ENCODE measurements at regions of chr3 and their contacts with region 1.

Region 1: GRCh38 chr3:171829841-171830517 is 13.2 kb upstream of the TMEM212 start:
- DNase-seq: peak in 2 of 4 experiments; percentile 58 to 80
- ATAC-seq: peak; percentile 96
- H3K4me3 ChIP-seq: no peak overlapping the region
- H3K27ac ChIP-seq: no peak overlapping the region
- H3K4me1 ChIP-seq: peaks cover 0 to 15% of the 10 kb centered on the region in 2 experiments; a peak in 3 of 5 replicates
- H3K27me3 ChIP-seq: no peaks in the 10 kb centered on the region
- CTCF ChIP-seq: peak; percentile 71 to 83 (median 75)
- EP300 ChIP-seq: no peak
- POLR2A ChIP-seq: no peak
- RAD21 ChIP-seq: peak; percentile 69 to 89

Region 2: GRCh38 chr3:171614318-171614921 is 215.6 kb before region 1 on chr3:
- CTCF ChIA-PET with region 1: interaction called, 3 read pairs
- POLR2A ChIA-PET with region 1: no interaction called
- in situ Hi-C with region 1: no loop called
- intact Hi-C with region 1: loop called (anchors 5 kb)
- DNase-seq: peak; percentile 32 to 57 (median 46)
- ATAC-seq: peak; percentile 96
- H3K4me3 ChIP-seq: no peak overlapping the region
- H3K27ac ChIP-seq: no peak overlapping the region
- H3K4me1 ChIP-seq: no peaks in the 10 kb centered on the region
- H3K27me3 ChIP-seq: no peaks in the 10 kb centered on the region
- CTCF ChIP-seq: peak; percentile 74 to 81 (median 76)
- EP300 ChIP-seq: no peak
- POLR2A ChIP-seq: no peak
- RAD21 ChIP-seq: peak in 1 of 2 experiments; percentile 72; a peak in 3 of 4 replicates

Region 3: GRCh38 chr3:171646357-171647133 is 183.4 kb before region 1 on chr3:
- CTCF ChIA-PET with region 1: interaction called, 20 read pairs
- POLR2A ChIA-PET with region 1: no interaction called
- in situ Hi-C with region 1: no loop called
- intact Hi-C with region 1: loop called (anchors 1 kb)
- DNase-seq: peak; percentile 11 to 36 (median 17)
- ATAC-seq: peak; percentile 76
- H3K4me3 ChIP-seq: no peak overlapping the region
- H3K27ac ChIP-seq: no peak overlapping the region
- H3K4me1 ChIP-seq: peaks cover 0 to 4% of the 10 kb centered on the region in 2 experiments; a peak in 1 of 5 replicates
- H3K27me3 ChIP-seq: no peaks in the 10 kb centered on the region
- CTCF ChIP-seq: peak; percentile 27 to 65 (median 43); a peak in 3 of 6 replicates
- EP300 ChIP-seq: no peak
- POLR2A ChIP-seq: no peak
- RAD21 ChIP-seq: peak; percentile 37 to 64

Region 4: DNA sequence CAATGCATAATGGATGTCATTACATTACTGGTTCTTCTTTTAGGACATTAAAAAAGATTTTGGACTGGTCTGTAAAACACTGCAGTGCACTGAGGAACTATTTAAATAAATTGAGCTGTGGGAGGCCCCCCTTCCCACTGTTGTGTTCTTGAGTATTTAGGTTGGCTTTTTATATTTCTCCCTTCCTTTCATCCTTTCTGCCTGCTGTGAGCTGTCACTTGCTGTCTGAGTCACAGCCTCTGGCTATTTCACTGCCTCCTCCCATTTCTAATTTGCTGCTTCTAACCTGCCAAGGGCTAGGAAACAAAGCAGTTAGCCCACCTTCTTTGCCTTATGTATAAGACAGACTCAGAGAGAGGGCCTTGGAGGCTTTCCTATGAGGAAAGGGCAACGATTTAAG is 120.4 kb after region 1 on chr3:
- CTCF ChIA-PET with region 1: no interaction called
- POLR2A ChIA-PET with region 1: no interaction called
- in situ Hi-C with region 1: no loop called
- intact Hi-C with region 1: no loop called
- DNase-seq: no peak
- ATAC-seq: peak; percentile 79
- H3K4me3 ChIP-seq: no peak overlapping the region
- H3K27ac ChIP-seq: 0 out of 3 replicates have a peak overlapping the region, but pooled peaks have one; percentile 28
- H3K4me1 ChIP-seq: no peaks in the 10 kb centered on the region; a peak in 2 of 5 replicates
- H3K27me3 ChIP-seq: no peaks in the 10 kb centered on the region
- CTCF ChIP-seq: no peak
- EP300 ChIP-seq: no peak
- POLR2A ChIP-seq: no peak
- RAD21 ChIP-seq: no peak

Region 5: GRCh38 chr3:172084871-172085556 is 255.0 kb after region 1 on chr3:
- CTCF ChIA-PET with region 1: no interaction called
- POLR2A ChIA-PET with region 1: no interaction called
- in situ Hi-C with region 1: no loop called
- intact Hi-C with region 1: no loop called
- DNase-seq: no peak
- ATAC-seq: no peak
- H3K4me3 ChIP-seq: no peak overlapping the region
- H3K27ac ChIP-seq: peak overlapping the region; percentile 14; the same call in 1 of the 3 replicates
- H3K4me1 ChIP-seq: peaks cover 4 to 36% of the 10 kb centered on the region in 2 experiments; a peak in 3 of 5 replicates
- H3K27me3 ChIP-seq: no peaks in the 10 kb centered on the region
- CTCF ChIP-seq: no peak
- EP300 ChIP-seq: no peak
- POLR2A ChIP-seq: no peak
- RAD21 ChIP-seq: no peak

Region 6: GRCh38 chr3:172341482-172342059 is 511.6 kb after region 1 on chr3:
- CTCF ChIA-PET with region 1: no interaction called
- POLR2A ChIA-PET with region 1: no interaction called
- in situ Hi-C with region 1: no loop called
- intact Hi-C with region 1: loop called (anchors 2 kb)
- DNase-seq: peak; percentile 37 to 67 (median 42)
- ATAC-seq: peak; percentile 84
- H3K4me3 ChIP-seq: no peak overlapping the region
- H3K27ac ChIP-seq: no peak overlapping the region
- H3K4me1 ChIP-seq: no peaks in the 10 kb centered on the region
- H3K27me3 ChIP-seq: no peaks in the 10 kb centered on the region
- CTCF ChIP-seq: peak; percentile 43 to 70 (median 55); a peak in 5 of 6 replicates
- EP300 ChIP-seq: no peak
- POLR2A ChIP-seq: no peak
- RAD21 ChIP-seq: peak; percentile 48 to 64

Region 7: DNA sequence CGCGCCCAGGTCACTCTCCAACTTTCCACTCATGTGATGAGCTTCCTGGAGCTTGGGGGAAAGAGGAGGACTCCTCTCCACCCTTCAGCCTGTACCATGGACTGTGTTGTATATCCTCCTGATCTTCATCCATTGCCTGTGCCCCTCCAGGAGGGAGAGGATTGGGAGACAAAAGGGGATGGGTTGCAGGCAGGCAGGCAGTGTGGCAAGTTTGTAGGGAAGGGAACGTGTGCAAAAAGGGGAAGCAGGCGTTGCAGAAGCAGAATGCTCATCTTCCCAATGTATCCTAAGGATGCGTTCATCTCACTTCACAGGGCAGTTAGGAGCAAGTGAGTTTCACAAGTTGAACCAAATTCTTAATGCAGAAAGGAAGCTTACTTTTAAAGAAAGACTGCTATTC is 646.4 kb after region 1 on chr3:
- CTCF ChIA-PET with region 1: no interaction called
- POLR2A ChIA-PET with region 1: no interaction called
- in situ Hi-C with region 1: no loop called
- intact Hi-C with region 1: loop called (anchors 10 kb)
- DNase-seq: no peak
- ATAC-seq: peak; percentile 41
- H3K4me3 ChIP-seq: no peak overlapping the region
- H3K27ac ChIP-seq: no peak overlapping the region
- H3K4me1 ChIP-seq: no peaks in the 10 kb centered on the region
- H3K27me3 ChIP-seq: no peaks in the 10 kb centered on the region
- CTCF ChIP-seq: no peak
- EP300 ChIP-seq: no peak
- POLR2A ChIP-seq: no peak
- RAD21 ChIP-seq: no peak

Measured in K562 (cell line).